Activated naive CD4-positive, alpha-beta T cell treated with anti-CD3 and anti-CD28 coated beads for 36 hours (primary cell): ENCODE measurements at regions of chr7 and their contacts with region 1.

Region 1: GRCh38 chr7:87152107-87152844 is at the start of gene DMTF1:
- DNase-seq: peak; percentile 91
- H3K4me3 Mint-ChIP-seq: peak within 1 kb of the TSS; percentile 84
- H3K27ac Mint-ChIP-seq: peak within 1 kb of the TSS; percentile 98
- H3K4me1 Mint-ChIP-seq: peaks cover 39% of the 10 kb centered on the region
- H3K27me3 Mint-ChIP-seq: no peaks in the 10 kb centered on the region
- total RNA-seq, gene DMTF1: 43.6 to 49.8 TPM

Region 2: DNA sequence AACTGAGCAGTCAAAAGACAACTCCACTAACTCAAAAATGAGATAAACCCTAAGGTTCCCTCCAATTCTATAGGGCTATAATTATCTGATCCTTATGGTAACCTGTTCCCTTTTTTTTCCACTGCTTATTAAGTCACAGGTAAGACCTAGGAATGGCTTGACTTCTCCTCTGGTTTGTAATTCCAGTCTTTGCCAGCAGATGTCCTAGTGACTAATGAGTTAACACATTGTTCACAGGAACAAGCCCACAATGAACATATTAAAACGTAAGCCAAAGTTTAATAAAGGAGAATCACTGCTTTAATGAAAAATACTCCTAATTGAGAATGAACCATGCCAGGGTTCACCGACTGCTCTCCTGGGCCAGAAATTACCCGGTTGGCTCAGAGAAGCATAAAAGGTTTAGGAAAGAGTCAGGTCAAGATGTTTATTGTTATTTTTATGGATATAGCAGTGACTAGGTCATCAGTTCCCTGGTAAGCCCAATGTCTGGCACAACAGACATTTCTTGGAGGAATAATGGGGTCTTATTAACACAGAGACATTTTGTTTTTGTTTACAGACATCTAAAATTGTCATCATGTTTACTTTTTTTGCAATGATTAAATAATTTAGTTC is 213.0 kb before region 1 on chr7:
- CTCF ChIA-PET with region 1: interaction called, 30 read pairs
- intact Hi-C with region 1: loop called (anchors 1 kb)
- DNase-seq: peak; percentile 62
- H3K4me3 Mint-ChIP-seq: no peak overlapping the region
- H3K27ac Mint-ChIP-seq: no peak overlapping the region
- H3K4me1 Mint-ChIP-seq: no peaks in the 10 kb centered on the region
- H3K27me3 Mint-ChIP-seq: no peaks in the 10 kb centered on the region

Region 3: DNA sequence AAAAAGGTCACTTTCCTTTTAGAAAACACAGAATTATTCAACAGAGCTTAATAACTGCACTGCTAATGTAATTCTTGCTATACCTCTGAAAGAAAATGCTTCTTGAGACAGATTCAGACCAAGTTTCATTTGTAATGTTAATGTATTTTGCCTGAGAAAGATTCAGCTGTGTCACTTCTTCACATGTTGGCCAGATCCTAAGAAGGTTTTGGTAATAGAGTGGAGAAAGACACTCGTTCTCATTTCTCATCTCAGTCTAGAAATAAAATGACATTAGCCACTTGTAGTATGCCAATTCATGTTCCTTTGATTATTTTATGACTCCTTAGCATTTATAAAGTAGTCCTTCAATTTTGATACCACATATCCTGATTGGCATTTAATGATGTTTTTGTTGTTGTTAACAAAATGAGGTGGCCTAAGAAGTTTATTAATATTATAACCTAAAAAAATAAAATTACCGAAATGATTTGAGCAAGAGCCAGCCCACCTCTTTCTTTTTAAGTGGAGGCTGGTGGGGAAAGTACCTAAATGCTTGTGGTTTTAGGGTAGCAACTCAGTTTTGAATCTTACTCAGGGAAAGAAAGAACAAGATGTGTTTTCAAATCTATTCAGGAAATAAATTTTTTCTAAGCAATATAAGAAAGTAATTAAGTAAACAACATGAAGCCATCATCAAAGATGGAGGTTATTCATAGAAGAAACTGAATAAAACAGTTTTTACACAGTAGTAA is 76.4 kb before region 1 on chr7:
- CTCF ChIA-PET with region 1: interaction called, 4 read pairs
- intact Hi-C with region 1: loop called (anchors 5 kb)
- DNase-seq: peak; percentile 5
- H3K4me3 Mint-ChIP-seq: no peak overlapping the region
- H3K27ac Mint-ChIP-seq: no peak overlapping the region
- H3K4me1 Mint-ChIP-seq: peaks cover 8% of the 10 kb centered on the region
- H3K27me3 Mint-ChIP-seq: peaks cover 5% of the 10 kb centered on the region

Region 4: GRCh38 chr7:87345166-87345927 is 193.1 kb after region 1 on chr7 and contains the start of gene CROT:
- CTCF ChIA-PET with region 1: no interaction called
- intact Hi-C with region 1: loop called (anchors 1 kb)
- DNase-seq: peak; percentile 97
- H3K4me3 Mint-ChIP-seq: peak within 1 kb of the TSS; percentile 89
- H3K27ac Mint-ChIP-seq: peak within 1 kb of the TSS; percentile 86
- H3K4me1 Mint-ChIP-seq: peaks cover 32% of the 10 kb centered on the region
- H3K27me3 Mint-ChIP-seq: no peaks in the 10 kb centered on the region
- total RNA-seq, gene CROT: 6.0 to 6.1 TPM

Region 5: DNA sequence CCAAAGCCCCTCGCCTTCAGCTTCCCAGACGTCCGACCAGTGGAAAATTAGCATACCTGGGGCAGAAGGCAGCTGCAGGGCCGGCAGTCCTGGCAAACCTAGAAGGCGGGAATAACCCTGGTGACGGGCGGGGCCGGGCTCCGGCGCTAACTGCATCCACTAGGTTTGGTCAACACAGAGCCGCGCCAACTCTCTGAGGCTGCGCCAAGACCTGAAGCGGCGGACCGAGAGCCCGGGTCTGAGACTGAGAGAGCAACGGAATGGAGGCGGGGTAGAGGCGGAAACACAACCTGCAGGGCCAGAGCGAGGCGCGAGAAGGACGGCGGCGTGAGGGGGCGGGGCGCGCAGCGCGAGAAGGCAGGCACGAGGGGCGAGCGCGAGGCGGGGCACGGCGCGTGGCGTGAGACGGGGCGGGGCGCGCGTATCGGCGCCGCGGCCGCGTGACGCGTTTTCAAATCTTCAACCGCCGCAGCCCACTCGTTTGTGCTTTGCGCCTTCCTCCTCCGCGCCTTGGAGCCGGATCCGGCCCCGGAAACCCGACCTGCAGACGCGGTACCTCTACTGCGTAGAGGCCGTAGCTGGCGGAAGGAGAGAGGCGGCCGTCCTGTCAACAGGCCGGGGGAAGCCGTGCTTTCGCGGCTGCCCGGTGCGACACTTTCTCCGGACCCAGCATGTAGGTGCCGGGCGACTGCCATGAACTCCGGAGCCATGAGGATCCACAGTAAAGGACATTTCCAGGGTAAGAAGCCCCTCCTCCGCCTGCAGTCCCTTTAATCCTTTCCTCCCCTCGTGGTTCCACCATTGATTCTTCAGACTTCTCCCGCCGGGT is 724.0 kb after region 1 on chr7 and contains the starts of genes DBF4 and SLC25A40:
- CTCF ChIA-PET with region 1: interaction called, 3 read pairs
- intact Hi-C with region 1: loop called (anchors 1 kb)
- DNase-seq: peak; percentile 94
- H3K4me3 Mint-ChIP-seq: peak within 1 kb of the TSS; percentile 91
- H3K27ac Mint-ChIP-seq: peak within 1 kb of the TSS; percentile 91
- H3K4me1 Mint-ChIP-seq: peaks cover 41% of the 10 kb centered on the region
- H3K27me3 Mint-ChIP-seq: no peaks in the 10 kb centered on the region
- total RNA-seq, gene DBF4: 70.1 to 70.6 TPM
- total RNA-seq, gene SLC25A40: 32.7 to 38.3 TPM